Activated CD4-positive, alpha-beta T cell treated with anti-CD3 and anti-CD28 coated beads, Interleukin-2, amount 10 ng/mL, durations not matched to agents 7 days and 5 days (primary cell): ENCODE measurements at regions of chr5 and their contacts with region 1.

Region 1: GRCh38 chr5:124007675-124008398 is 495.9 kb downstream of the CSNK1G3 start:
- DNase-seq: no peak
- H3K4me3 Mint-ChIP-seq: no peak overlapping the region
- H3K27ac Mint-ChIP-seq: no peak overlapping the region
- H3K4me1 Mint-ChIP-seq: no peaks in the 10 kb centered on the region
- H3K27me3 Mint-ChIP-seq: no peaks in the 10 kb centered on the region

Region 2: DNA sequence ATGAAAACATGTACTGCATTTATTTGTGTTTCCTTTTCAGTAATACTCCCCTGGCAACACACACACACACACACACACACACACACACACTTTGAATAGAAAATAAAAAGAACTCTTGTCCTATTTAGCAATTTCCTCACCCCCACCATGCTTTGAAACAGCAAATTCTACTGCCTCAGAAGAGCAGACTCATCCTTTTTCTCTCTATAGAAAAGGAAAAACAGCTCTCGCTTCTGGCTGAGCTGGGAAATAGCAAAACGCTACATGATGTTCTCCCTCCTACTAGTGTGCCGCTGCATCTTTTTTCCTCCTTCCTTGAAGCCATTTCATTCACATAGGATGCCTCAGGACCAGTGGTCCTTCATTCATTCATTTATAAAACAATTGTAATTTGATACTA is 42.2 kb before region 1 on chr5:
- CTCF ChIA-PET with region 1: no interaction called
- POLR2A ChIA-PET with region 1: no interaction called
- DNase-seq: no peak
- H3K4me3 Mint-ChIP-seq: no peak overlapping the region
- H3K27ac Mint-ChIP-seq: no peak overlapping the region
- H3K4me1 Mint-ChIP-seq: no peaks in the 10 kb centered on the region
- H3K27me3 Mint-ChIP-seq: no peaks in the 10 kb centered on the region

Region 3: GRCh38 chr5:124025306-124025845 is 17.5 kb after region 1 on chr5:
- CTCF ChIA-PET with region 1: no interaction called
- POLR2A ChIA-PET with region 1: no interaction called
- DNase-seq: no peak
- H3K4me3 Mint-ChIP-seq: no peak overlapping the region
- H3K27ac Mint-ChIP-seq: no peak overlapping the region
- H3K4me1 Mint-ChIP-seq: no peaks in the 10 kb centered on the region
- H3K27me3 Mint-ChIP-seq: no peaks in the 10 kb centered on the region

Region 4: DNA sequence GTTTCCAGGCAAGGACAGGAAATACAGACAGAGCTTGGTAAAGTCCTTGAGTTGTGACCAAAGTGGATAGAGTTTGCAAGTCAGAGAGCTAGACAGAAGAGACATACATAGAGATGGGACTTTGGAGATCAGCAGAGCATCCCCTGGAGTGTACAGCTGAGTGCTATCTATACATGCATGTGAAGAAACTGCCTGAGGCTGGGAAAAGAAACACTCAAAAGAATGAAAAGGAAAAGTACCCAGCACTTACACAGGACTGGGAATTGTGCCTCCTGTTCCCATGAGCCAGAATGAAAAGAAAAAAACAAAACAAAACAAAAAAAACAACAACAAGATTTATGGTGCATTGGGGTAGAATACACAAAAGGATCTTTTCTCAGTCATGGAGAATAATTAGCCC is 132.2 kb after region 1 on chr5:
- CTCF ChIA-PET with region 1: no interaction called
- POLR2A ChIA-PET with region 1: interaction called, 12 read pairs
- DNase-seq: no peak
- H3K4me3 Mint-ChIP-seq: no peak overlapping the region
- H3K27ac Mint-ChIP-seq: no peak overlapping the region
- H3K4me1 Mint-ChIP-seq: no peaks in the 10 kb centered on the region
- H3K27me3 Mint-ChIP-seq: no peaks in the 10 kb centered on the region